SK-N-SH (cell line): ENCODE measurements at regions of chr18 and their contacts with region 1.

Region 1: GRCh38 chr18:55405893-55406406 is 182.0 kb downstream of the TCF4 start:
- DNase-seq: peak; percentile 52
- H3K4me3 ChIP-seq: peak overlapping the region; percentile 48 to 65
- H3K27ac ChIP-seq: peak overlapping the region; percentile 95 to 99
- H3K4me1 ChIP-seq: peaks cover 41 to 50% of the 10 kb centered on the region in 2 experiments
- H3K27me3 ChIP-seq: no peaks in the 10 kb centered on the region
- CTCF ChIP-seq: peak; percentile 37
- EP300 ChIP-seq: peak; percentile 77 to 89
- RAD21 ChIP-seq: peak; percentile 49

Region 2: GRCh38 chr18:55343396-55344073 is 62.4 kb before region 1 on chr18:
- CTCF ChIA-PET with region 1: interaction called, 29 read pairs
- POLR2A ChIA-PET with region 1: interaction called, 3 read pairs
- DNase-seq: no peak
- H3K4me3 ChIP-seq: no peak overlapping the region
- H3K27ac ChIP-seq: peak overlapping the region; percentile 15 to 43; a peak in 3 of 4 replicates
- H3K4me1 ChIP-seq: peaks cover 30 to 43% of the 10 kb centered on the region in 2 experiments
- H3K27me3 ChIP-seq: no peaks in the 10 kb centered on the region
- CTCF ChIP-seq: peak; percentile 79
- EP300 ChIP-seq: no peak
- RAD21 ChIP-seq: peak; percentile 86

Region 3: DNA sequence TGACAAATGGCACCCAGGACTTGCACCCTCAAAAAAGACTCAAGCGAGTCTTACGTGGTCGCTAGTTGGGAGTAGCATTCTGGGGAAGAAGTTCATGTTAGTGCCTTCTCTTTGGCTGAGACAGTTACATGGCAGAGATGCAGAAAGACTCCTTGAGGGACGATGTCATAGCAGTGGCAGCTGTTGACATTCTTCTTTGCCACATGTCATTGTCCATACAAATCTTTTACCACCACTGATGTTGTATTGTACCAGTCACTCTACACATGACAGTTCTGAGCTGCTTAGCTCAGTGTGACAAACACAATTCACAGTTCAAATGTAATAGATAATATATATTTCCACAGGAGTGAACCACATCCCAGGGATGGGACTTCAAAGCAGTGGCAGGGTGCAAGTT is 15.1 kb before region 1 on chr18:
- CTCF ChIA-PET with region 1: no interaction called
- POLR2A ChIA-PET with region 1: no interaction called
- DNase-seq: no peak
- H3K4me3 ChIP-seq: no peak overlapping the region; a peak in 1 of 4 replicates
- H3K27ac ChIP-seq: no peak overlapping the region
- H3K4me1 ChIP-seq: peaks cover 0 to 18% of the 10 kb centered on the region in 2 experiments; a peak in 3 of 4 replicates
- H3K27me3 ChIP-seq: no peaks in the 10 kb centered on the region
- CTCF ChIP-seq: no peak
- EP300 ChIP-seq: no peak
- RAD21 ChIP-seq: no peak

Region 4: DNA sequence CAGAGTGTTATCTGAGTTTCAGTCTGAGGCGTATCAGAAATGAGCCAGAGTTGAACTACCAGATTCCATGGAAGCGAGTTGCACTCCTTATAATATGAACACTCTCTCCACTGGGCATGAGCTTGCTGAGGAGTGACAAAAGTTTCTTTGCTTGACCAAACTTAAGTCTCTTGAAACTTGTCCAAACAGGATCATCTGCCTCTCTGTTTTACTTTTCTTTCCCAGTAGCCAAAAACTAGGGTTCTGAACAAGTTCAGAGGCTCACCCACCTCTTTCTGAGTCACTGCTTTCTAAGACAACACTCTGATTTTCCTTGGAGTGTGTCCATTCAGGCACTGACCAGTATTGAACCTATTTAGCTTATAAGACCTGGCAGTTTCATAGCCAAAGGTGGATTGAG is 415.3 kb after region 1 on chr18:
- CTCF ChIA-PET with region 1: no interaction called
- POLR2A ChIA-PET with region 1: no interaction called
- DNase-seq: no peak
- H3K4me3 ChIP-seq: no peak overlapping the region
- H3K27ac ChIP-seq: peak overlapping the region; percentile 30 to 58; a peak in 3 of 4 replicates
- H3K4me1 ChIP-seq: peaks cover under 1 to 7% of the 10 kb centered on the region in 2 experiments; a peak in 3 of 4 replicates
- H3K27me3 ChIP-seq: no peaks in the 10 kb centered on the region
- CTCF ChIP-seq: no peak
- EP300 ChIP-seq: no peak
- RAD21 ChIP-seq: no peak